AG04449 (cell line): ENCODE measurements at regions of chr16 and their contacts with region 1.

Region 1: DNA sequence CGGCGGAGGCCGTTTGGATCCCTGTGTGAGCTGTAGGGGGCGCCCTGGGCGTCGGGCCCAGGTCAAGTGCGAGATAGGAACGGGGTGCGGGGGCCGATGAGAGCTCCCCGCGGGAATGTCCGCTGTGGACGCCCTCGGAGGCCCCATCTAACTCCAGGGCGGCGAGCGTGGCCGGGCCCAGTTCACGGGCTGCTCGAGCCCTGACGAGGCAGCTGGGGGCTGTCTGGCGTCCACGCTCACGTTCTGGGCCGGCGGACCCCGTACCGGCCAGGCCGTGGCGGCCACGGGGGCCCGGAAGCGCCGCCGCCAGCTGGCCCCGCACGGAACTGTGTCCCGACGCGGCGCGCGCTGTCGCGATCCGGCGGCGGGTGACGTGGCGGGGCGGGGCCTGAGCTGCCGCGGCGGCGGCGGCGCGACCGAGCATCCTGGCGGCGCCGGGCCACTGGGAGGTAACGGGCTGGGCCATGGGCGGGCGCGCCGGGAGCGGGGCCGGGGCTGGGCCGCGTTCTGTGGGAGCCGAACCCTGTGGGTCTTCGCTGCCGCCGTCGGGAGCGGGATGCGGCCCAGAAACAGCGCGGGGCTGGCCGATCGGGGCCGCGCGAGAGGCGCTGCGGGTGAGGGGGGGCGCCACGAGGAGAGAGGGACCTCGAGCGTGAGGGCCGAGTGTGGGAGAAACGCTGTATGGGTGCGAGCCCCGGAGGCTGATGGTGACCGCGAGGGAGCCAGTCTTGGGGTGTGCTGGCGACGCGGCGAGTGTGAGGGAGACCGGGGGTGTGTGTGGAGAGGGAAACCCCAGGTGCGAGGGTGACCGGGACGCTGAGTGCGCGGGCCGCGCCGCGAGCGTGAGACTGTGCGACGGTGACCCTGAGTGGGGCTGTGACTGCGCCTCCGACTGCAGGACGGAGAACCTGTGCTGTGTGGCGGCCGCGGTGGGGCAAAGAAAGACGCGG is at the start of gene SLC7A6:
- DNase-seq: no peak
- H3K4me3 ChIP-seq: peak within 1 kb of the TSS; percentile 98
- CTCF ChIP-seq: peak; percentile 82

Region 2: DNA sequence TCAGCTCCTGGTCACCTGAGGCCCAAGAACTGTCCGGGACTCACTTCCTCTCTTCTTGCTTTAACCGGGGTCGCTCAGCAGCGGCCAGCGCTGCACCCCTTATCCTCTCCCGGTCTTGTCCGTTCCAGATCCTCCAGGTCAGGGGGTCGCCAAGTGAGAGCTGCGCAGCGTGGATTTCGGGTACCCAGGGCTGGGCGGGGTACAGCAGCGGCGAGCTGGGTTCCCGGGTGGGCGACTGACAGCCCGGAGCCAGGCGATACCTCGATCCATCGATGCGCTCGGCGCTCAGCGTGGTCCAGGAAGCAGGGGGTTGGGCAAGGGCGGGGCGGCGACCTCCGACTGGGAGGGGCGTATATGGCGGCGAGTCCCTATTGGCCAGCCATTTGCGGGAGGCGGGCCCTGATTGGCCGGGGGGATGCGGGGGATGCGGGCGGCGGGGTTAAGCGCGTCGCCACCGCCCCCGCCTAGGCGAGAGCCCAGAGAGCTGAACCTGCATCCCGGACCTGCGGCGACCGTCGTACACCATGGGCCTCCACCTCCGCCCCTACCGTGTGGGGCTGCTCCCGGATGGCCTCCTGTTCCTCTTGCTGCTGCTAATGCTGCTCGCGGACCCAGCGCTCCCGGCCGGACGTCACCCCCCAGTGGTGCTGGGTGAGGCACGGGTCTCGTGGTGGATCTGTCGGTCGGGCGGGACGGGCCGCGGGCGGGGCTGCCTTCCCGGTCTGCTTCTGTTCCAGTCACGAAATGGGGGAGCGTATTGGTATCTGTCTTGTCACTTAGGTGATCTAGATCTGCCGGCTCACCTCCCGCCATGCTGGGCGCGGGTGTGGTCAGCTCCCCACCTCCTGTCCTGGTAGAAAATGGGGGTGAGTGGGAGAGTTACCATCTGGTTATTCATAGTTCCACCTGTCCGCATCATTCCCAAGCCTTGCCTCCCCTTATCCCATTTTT is 19.2 kb before region 1 on chr16 and contains the start of gene PLA2G15:
- CTCF ChIA-PET with region 1: interaction called, 70 read pairs
- POLR2A ChIA-PET with region 1: interaction called, 17 read pairs
- DNase-seq: peak; percentile 73
- H3K4me3 ChIP-seq: peak within 1 kb of the TSS; percentile 99
- CTCF ChIP-seq: no peak

Region 3: GRCh38 chr16:68275611-68276191 is 11.3 kb after region 1 on chr16:
- CTCF ChIA-PET with region 1: interaction called, 126 read pairs
- POLR2A ChIA-PET with region 1: interaction called, 7 read pairs
- DNase-seq: no peak
- H3K4me3 ChIP-seq: no peak overlapping the region
- CTCF ChIP-seq: no peak

Region 4: GRCh38 chr16:68298907-68299561 is 34.6 kb after region 1 on chr16:
- CTCF ChIA-PET with region 1: interaction called, 46 read pairs
- POLR2A ChIA-PET with region 1: interaction called, 20 read pairs
- DNase-seq: peak; percentile 46
- H3K4me3 ChIP-seq: no peak overlapping the region
- CTCF ChIP-seq: no peak

Region 5: GRCh38 chr16:68328151-68328859 is 63.9 kb after region 1 on chr16:
- CTCF ChIA-PET with region 1: interaction called, 374 read pairs
- POLR2A ChIA-PET with region 1: interaction called, 5 read pairs
- DNase-seq: peak; percentile 38
- H3K4me3 ChIP-seq: no peak overlapping the region
- CTCF ChIP-seq: peak; percentile 85

Region 6: GRCh38 chr16:68538880-68539701 is 274.7 kb after region 1 on chr16 and contains the start of gene ZFP90:
- CTCF ChIA-PET with region 1: no interaction called
- POLR2A ChIA-PET with region 1: no interaction called
- DNase-seq: peak; percentile 4
- H3K4me3 ChIP-seq: peak within 1 kb of the TSS; percentile 73
- CTCF ChIP-seq: no peak